SK-N-SH (cell line): ENCODE measurements at regions of chr20 and their contacts with region 1.

Region 1: GRCh38 chr20:48556956-48557355 is 270.8 kb downstream of the PREX1 start:
- DNase-seq: peak; percentile 57
- H3K4me3 ChIP-seq: no peak overlapping the region
- H3K27ac ChIP-seq: peak overlapping the region in 1 of 2 experiments; percentile 76; a peak in 2 of 4 replicates
- H3K4me1 ChIP-seq: peaks cover 0 to 27% of the 10 kb centered on the region in 2 experiments; a peak in 2 of 4 replicates
- H3K27me3 ChIP-seq: no peaks in the 10 kb centered on the region; the same call in 1 of the 2 replicates
- CTCF ChIP-seq: no peak
- EP300 ChIP-seq: no peak
- RAD21 ChIP-seq: no peak

Region 2: GRCh38 chr20:48398506-48399505 is 158.2 kb before region 1 on chr20:
- CTCF ChIA-PET with region 1: no interaction called
- POLR2A ChIA-PET with region 1: no interaction called
- DNase-seq: no peak
- H3K4me3 ChIP-seq: no peak overlapping the region
- H3K27ac ChIP-seq: peak overlapping the region in 1 of 2 experiments; percentile 97; a peak in 2 of 4 replicates
- H3K4me1 ChIP-seq: peaks cover 0 to 48% of the 10 kb centered on the region in 2 experiments; a peak in 2 of 4 replicates
- H3K27me3 ChIP-seq: no peaks in the 10 kb centered on the region; the same call in none of the 2 replicates
- CTCF ChIP-seq: no peak
- EP300 ChIP-seq: no peak
- RAD21 ChIP-seq: no peak

Region 3: GRCh38 chr20:48545015-48545718 is 11.8 kb before region 1 on chr20:
- CTCF ChIA-PET with region 1: interaction called, 11 read pairs
- POLR2A ChIA-PET with region 1: no interaction called
- DNase-seq: peak; percentile 81
- H3K4me3 ChIP-seq: no peak overlapping the region
- H3K27ac ChIP-seq: peak overlapping the region in 1 of 2 experiments; percentile 31; a peak in 1 of 4 replicates
- H3K4me1 ChIP-seq: peaks cover 0 to 14% of the 10 kb centered on the region in 2 experiments; a peak in 1 of 4 replicates
- H3K27me3 ChIP-seq: no peaks in the 10 kb centered on the region
- CTCF ChIP-seq: no peak
- EP300 ChIP-seq: peak in 1 of 2 experiments; percentile 9; a peak in 1 of 4 replicates
- RAD21 ChIP-seq: peak; percentile 77